Transverse colon (tissue), 4 donors: ENCODE measurements at regions of chr7 and their contacts with region 1.

Region 1: DNA sequence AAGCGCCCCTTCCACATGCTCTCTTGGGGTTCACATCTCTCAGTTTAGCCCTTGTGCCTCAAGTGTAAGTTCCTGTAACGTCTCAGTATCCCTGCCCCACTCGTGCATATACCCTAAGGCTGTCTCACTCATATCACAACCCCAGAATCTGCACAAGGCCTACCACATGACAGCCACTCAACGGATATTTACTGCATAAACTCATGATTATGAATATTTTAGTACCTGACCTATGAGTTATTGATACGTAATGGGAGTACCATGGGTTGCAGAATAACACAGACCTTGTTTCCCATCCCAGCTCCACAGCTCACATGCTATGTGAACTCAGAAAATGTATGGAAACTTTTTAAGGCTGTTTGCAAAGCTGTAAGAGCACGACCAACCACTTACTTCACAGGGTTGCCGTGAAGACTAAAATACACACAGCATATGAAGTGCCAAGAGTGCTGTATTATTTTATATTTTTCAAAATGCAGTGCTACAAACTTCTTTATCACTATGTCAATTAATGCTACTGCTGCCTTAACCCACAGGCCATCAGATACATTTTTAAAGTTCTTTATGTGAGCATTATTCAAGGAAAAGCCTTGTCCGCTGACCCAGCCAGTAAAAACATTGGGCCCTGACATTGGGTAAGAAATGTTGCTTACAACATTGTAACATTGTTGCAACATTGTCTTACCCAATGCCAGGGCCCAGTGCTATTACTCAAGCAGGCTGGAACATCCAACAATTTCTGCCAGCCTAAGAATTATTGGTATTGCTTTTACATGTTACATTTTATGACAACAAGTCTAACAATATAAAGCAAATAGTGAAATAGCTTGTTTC is 97.2 kb downstream of the JAZF1 start:
- DNase-seq: no peak
- H3K4me3 ChIP-seq: no peak overlapping the region
- H3K27ac ChIP-seq: peak overlapping the region; percentile 33 to 67 (median 56)
- H3K4me1 ChIP-seq: peaks cover 0 to 30% (median 0%) of the 10 kb centered on the region in 4 donors
- H3K27me3 ChIP-seq: no peaks in the 10 kb centered on the region
- CTCF ChIP-seq: no peak
- EP300 ChIP-seq: no peak
- POLR2A ChIP-seq: no peak

Region 2: DNA sequence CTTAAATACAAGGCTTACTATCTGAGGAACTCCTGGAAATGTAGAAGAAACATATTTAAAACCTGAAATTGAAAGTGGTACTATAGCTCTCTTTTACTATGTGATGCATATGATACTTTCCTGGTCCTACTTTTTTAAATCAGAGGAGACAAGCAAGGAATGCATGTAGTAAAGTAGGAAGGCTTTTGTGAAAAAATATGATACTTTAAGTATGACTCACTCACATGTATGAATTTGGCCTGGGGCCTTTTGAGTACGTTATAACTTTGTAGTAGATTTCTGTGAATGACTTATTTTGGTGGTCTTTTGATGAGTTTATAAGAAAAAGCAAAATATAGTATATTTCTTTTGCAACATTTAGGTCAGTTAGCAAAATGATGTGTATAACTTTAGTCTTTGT is 289.6 kb before region 1 on chr7:
- in situ Hi-C with region 1: no loop called
- intact Hi-C with region 1: no loop called
- DNase-seq: no peak
- H3K4me3 ChIP-seq: no peak overlapping the region
- H3K27ac ChIP-seq: no peak overlapping the region
- H3K4me1 ChIP-seq: no peaks in the 10 kb centered on the region
- H3K27me3 ChIP-seq: no peaks in the 10 kb centered on the region
- CTCF ChIP-seq: no peak
- EP300 ChIP-seq: no peak
- POLR2A ChIP-seq: no peak

Region 3: GRCh38 chr7:28037220-28038010 is 46.0 kb before region 1 on chr7:
- in situ Hi-C with region 1: no loop called
- intact Hi-C with region 1: loop called (anchors 2 kb)
- DNase-seq: no peak
- H3K4me3 ChIP-seq: no peak overlapping the region
- H3K27ac ChIP-seq: peak overlapping the region; percentile 55 to 83 (median 65)
- H3K4me1 ChIP-seq: peaks cover 4 to 39% (median 16%) of the 10 kb centered on the region in 4 donors
- H3K27me3 ChIP-seq: no peaks in the 10 kb centered on the region
- CTCF ChIP-seq: no peak
- EP300 ChIP-seq: no peak
- POLR2A ChIP-seq: no peak